Activated T-helper 1 cell treated with anti-CD3 and anti-CD28 coated beads, Interleukin-12 subunit alpha, Interleukin-12 subunit beta, Interleukin-2, Interleukin-4 antibody, amounts not matched to agents 30 ng/mL and 10 ng/mL and 1 ng/mL, durations not matched to agents 14 hours and 24 hours and 36 hours (primary cell): ENCODE measurements at regions of chr6 and their contacts with region 1.

Region 1: GRCh38 chr6:111950661-111951496 is 77.6 kb upstream of the FYN start:
- DNase-seq: no peak
- H3K4me3 Mint-ChIP-seq: no peak overlapping the region
- H3K27ac Mint-ChIP-seq: no peak overlapping the region
- H3K4me1 Mint-ChIP-seq: peaks cover 5% of the 10 kb centered on the region
- H3K27me3 Mint-ChIP-seq: peaks cover 12% of the 10 kb centered on the region

Region 2: GRCh38 chr6:111888928-111889695 is 61.8 kb before region 1 on chr6:
- intact Hi-C with region 1: loop called (anchors 5 kb)
- DNase-seq: no peak
- H3K4me3 Mint-ChIP-seq: no peak overlapping the region
- H3K27ac Mint-ChIP-seq: no peak overlapping the region
- H3K4me1 Mint-ChIP-seq: no peaks in the 10 kb centered on the region
- H3K27me3 Mint-ChIP-seq: peaks cover 16% of the 10 kb centered on the region

Region 3: GRCh38 chr6:111938716-111939115 is 12.2 kb before region 1 on chr6:
- intact Hi-C with region 1: no loop called
- DNase-seq: no peak
- H3K4me3 Mint-ChIP-seq: no peak overlapping the region
- H3K27ac Mint-ChIP-seq: no peak overlapping the region
- H3K4me1 Mint-ChIP-seq: peaks cover 5% of the 10 kb centered on the region
- H3K27me3 Mint-ChIP-seq: peaks cover 3% of the 10 kb centered on the region